CD4-positive, alpha-beta T cell (primary cell): ENCODE measurements at regions of chr6 and their contacts with region 1.

Region 1: DNA sequence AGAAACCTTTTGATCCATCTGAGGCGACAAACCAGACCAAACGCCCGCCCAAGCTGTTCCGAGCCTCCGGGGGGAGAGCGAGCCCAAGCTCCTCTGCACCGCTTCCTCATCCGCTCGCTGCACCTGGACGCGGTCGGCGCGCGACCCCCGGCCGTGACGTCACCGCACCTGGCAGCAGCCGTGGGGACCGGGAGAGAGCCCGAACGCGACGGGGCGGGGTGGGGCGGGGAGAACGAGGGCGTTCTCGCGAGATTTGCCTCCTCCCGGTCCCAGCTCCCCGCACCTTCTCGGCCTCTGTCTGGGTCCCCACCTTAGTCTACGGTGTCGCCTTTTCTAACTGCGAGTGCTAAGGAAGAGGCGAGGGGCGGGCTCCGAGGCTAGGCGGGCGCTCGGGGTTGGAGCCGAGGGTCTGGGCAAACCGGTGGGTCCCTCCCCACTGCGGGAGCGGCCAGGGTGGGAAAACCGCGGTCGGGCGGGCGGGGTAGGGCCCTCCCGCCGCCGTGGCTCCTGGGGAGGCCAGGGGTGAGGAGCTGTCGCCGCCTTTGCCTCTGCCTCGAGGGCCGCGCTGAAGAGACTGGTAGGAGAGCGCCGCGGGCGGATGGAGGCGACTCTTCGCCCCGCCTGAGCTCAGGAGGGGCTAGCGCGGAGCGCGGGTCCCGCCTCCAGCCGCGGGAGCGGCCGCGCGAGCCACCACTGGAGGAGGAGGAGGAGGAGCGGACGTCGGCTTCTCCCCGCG is at the start of gene CD2AP:
- DNase-seq: peak; percentile 81 to 96 (median 88)
- ATAC-seq: peak; percentile 85
- H3K4me3 ChIP-seq: peak within 1 kb of the TSS; percentile 92
- H3K4me3 Mint-ChIP-seq: peak within 1 kb of the TSS; percentile 100
- H3K27ac ChIP-seq: peak within 1 kb of the TSS; percentile 85 to 91
- H3K27ac Mint-ChIP-seq: peak within 1 kb of the TSS; percentile 95
- H3K4me1 ChIP-seq: peaks cover 16% of the 10 kb centered on the region
- H3K4me1 Mint-ChIP-seq: peaks cover 46% of the 10 kb centered on the region
- H3K27me3 ChIP-seq: no peaks in the 10 kb centered on the region
- H3K27me3 Mint-ChIP-seq: no peaks in the 10 kb centered on the region
- CTCF ChIP-seq: no peak
- total RNA-seq, gene CD2AP: 29.4 to 31.3 TPM

Region 2: DNA sequence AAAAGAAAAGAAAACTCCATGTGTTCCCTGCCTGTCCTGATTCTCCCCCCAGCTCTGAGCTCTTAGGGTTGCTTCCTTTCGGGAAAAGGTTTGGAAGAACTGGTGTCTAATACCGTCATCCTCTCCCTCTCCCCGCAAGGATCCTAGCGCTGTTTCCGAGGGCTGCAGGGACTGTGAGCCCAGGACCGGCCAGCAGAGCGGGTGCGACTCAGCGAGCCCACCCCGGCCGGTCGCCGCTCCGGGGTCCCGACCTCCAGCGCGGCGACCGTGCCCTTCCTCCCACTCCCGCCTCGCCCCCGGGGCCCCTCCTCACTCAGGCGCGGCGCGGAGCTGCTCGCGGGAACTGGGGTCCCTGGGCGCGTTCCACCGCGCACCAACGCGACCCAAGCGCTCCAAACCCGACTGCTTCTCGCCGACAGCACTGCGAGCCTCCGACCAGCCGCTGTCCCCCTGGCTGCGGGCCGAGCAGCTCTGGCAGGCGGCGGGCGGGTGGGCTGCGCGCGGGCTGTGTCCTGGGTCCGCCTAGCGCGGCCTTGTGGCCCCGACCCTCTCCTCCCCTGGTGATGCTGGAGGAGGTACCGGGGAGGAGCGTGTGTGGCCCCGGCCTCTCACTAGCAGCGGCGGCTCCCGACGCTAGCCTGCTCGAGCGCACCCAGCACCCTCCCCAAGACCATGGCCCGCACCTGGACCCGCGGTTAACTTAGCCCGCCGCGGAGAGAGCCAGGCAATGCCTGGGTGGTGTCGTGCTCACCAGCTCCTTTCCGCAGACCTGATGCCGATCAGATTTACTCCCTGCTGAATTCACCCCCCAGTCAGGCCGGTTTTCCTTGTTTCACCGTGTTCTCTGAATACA is 742.6 kb before region 1 on chr6 and contains the start of gene PLA2G7:
- CTCF ChIA-PET with region 1: no interaction called
- POLR2A ChIA-PET with region 1: no interaction called
- intact Hi-C with region 1: no loop called
- DNase-seq: peak in 2 of 14 experiments; percentile 7 to 13
- ATAC-seq: no peak
- H3K4me3 ChIP-seq: peak within 1 kb of the TSS; percentile 19
- H3K4me3 Mint-ChIP-seq: no peak within 1 kb of the TSS
- H3K27ac ChIP-seq: no peak within 1 kb of the TSS
- H3K27ac Mint-ChIP-seq: no peak within 1 kb of the TSS
- H3K4me1 ChIP-seq: no peaks in the 10 kb centered on the region
- H3K4me1 Mint-ChIP-seq: no peaks in the 10 kb centered on the region
- H3K27me3 ChIP-seq: peaks cover 36 to 60% of the 10 kb centered on the region in 2 experiments
- H3K27me3 Mint-ChIP-seq: peaks cover 73% of the 10 kb centered on the region
- CTCF ChIP-seq: no peak
- total RNA-seq, gene PLA2G7: not detected

Region 3: DNA sequence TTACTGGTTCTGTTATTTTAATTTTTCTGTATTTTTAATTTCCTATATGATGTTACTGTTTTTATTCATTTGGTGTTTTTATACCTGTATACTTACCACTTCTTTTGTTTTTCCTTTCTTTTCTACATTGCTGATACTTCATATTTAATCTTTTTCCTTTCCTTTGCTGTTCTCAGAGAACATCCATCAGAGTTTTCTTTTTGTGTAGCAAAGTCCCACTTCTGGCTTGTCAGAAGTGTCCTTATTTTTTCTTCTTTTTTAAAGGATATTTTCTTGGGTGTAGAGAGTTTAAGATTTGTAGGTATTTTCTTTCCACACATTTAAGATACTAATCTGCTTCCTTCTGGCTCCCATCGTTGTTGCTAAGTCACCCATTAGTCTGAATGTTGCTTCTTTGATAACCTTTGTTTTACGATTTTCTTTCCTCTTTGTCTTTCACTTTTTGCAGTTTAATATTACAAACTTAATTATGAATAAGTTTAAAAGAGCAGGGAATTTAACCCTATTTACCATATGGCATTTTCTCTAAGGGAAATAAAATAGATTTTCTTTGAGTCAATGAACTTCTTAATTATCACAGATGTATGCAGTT is 18.4 kb after region 1 on chr6:
- CTCF ChIA-PET with region 1: no interaction called
- POLR2A ChIA-PET with region 1: interaction called, 5 read pairs
- intact Hi-C with region 1: loop called in 1 of 2 experiments (anchors 2 kb)
- DNase-seq: no peak
- ATAC-seq: no peak
- H3K4me3 ChIP-seq: no peak overlapping the region
- H3K4me3 Mint-ChIP-seq: no peak overlapping the region
- H3K27ac ChIP-seq: no peak overlapping the region
- H3K27ac Mint-ChIP-seq: no peak overlapping the region
- H3K4me1 ChIP-seq: peaks cover 3% of the 10 kb centered on the region
- H3K4me1 Mint-ChIP-seq: peaks cover 90% of the 10 kb centered on the region
- H3K27me3 ChIP-seq: no peaks in the 10 kb centered on the region
- H3K27me3 Mint-ChIP-seq: no peaks in the 10 kb centered on the region
- CTCF ChIP-seq: no peak

Region 4: GRCh38 chr6:47571488-47571887 is 93.8 kb after region 1 on chr6:
- CTCF ChIA-PET with region 1: no interaction called
- POLR2A ChIA-PET with region 1: no interaction called
- intact Hi-C with region 1: loop called in 1 of 2 experiments (anchors 10 kb)
- DNase-seq: no peak
- ATAC-seq: no peak
- H3K4me3 ChIP-seq: no peak overlapping the region
- H3K4me3 Mint-ChIP-seq: no peak overlapping the region
- H3K27ac ChIP-seq: no peak overlapping the region
- H3K27ac Mint-ChIP-seq: no peak overlapping the region
- H3K4me1 ChIP-seq: no peaks in the 10 kb centered on the region
- H3K4me1 Mint-ChIP-seq: peaks cover 4% of the 10 kb centered on the region
- H3K27me3 ChIP-seq: no peaks in the 10 kb centered on the region
- H3K27me3 Mint-ChIP-seq: no peaks in the 10 kb centered on the region
- CTCF ChIP-seq: no peak